GM10248 (cell line): ENCODE measurements at regions of chr1 and their contacts with region 1.

Region 1: GRCh38 chr1:31196685-31197084 is 43.0 kb downstream of the NKAIN1 start:
- DNase-seq: no peak
- CTCF ChIP-seq: no peak

Region 2: GRCh38 chr1:31182352-31182751 is 14.3 kb before region 1 on chr1:
- CTCF ChIA-PET with region 1: interaction called, 15 read pairs
- POLR2A ChIA-PET with region 1: no interaction called
- DNase-seq: peak; percentile 79
- CTCF ChIP-seq: no peak

Region 3: DNA sequence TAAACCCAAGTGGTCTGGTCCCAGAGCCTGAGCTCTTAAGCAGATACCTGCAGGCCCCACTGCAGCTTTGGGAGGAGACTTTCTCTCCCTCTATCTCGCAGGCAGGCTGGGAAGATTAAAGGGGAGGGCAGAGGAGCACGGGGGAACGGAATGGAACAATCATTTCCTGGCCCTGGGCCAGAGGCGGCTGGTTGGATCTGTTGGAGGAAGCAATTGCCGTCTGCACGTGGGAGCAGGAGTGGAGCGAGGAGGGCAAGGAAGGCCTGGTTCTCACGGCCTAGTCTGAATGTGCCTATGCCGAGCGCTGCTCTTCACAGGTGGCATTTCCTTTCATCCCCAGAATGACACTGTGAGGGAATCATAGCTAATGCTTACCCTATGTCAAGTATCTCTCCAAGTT is 19.3 kb after region 1 on chr1:
- CTCF ChIA-PET with region 1: no interaction called
- POLR2A ChIA-PET with region 1: no interaction called
- DNase-seq: no peak
- CTCF ChIP-seq: no peak